Breast epithelium (tissue), 4 donors: ENCODE measurements at regions of chr6 and their contacts with region 1.

Region 1: GRCh38 chr6:109690737-109691621 is at the starts of genes AK9 and FIG4:
- DNase-seq: peak; percentile 91 to 92
- H3K4me3 ChIP-seq: peak within 1 kb of the TSS; percentile 78 to 89 (median 81)
- H3K27ac ChIP-seq: peak within 1 kb of the TSS; percentile 87 to 94
- H3K4me1 ChIP-seq: no peaks in the 10 kb centered on the region
- H3K27me3 ChIP-seq: no peaks in the 10 kb centered on the region
- CTCF ChIP-seq: no peak
- POLR2A ChIP-seq: no peak
- total RNA-seq, gene AK9: 8.8 to 23.9 (median 20.0) TPM
- total RNA-seq, gene FIG4: 18.2 to 29.6 (median 18.4) TPM

Region 2: GRCh38 chr6:110179401-110180227 is 488.6 kb after region 1 on chr6 and contains the start of gene WASF1:
- intact Hi-C with region 1: loop called (anchors 10 kb)
- DNase-seq: peak; percentile 92 to 95
- H3K4me3 ChIP-seq: peak within 1 kb of the TSS; percentile 77 to 94 (median 85)
- H3K27ac ChIP-seq: peak within 1 kb of the TSS; percentile 82 to 93
- H3K4me1 ChIP-seq: peaks cover 0 to 4% of the 10 kb centered on the region in 2 donors
- H3K27me3 ChIP-seq: no peaks in the 10 kb centered on the region
- CTCF ChIP-seq: no peak
- POLR2A ChIP-seq: no peak
- total RNA-seq, gene WASF1: 11.4 to 19.7 (median 12.3) TPM